ENCODE measurements at regions of chr3 and their contacts with region 1.

Region 1: GRCh38 chr3:18438586-18438985 is 13.4 kb upstream of the SATB1 start:
- DNase-seq: peak in 8 of 9 donors; percentile 64 to 91 (median 79)
- ATAC-seq: peak; percentile 95
- H3K4me3 ChIP-seq: peak overlapping the region; percentile 65
- H3K4me3 Mint-ChIP-seq: peak overlapping the region; percentile 80 to 100 (median 88)
- H3K27ac ChIP-seq: peak overlapping the region; percentile 97
- H3K27ac Mint-ChIP-seq: peak overlapping the region; percentile 87 to 95 (median 93)
- H3K4me1 ChIP-seq: peaks cover 11 to 19% of the 10 kb centered on the region in 2 donors
- H3K4me1 Mint-ChIP-seq: peaks cover 25 to 53% (median 43%) of the 10 kb centered on the region in 7 donors
- H3K27me3 ChIP-seq: no peaks in the 10 kb centered on the region
- H3K27me3 Mint-ChIP-seq: no peaks in the 10 kb centered on the region

Region 2: DNA sequence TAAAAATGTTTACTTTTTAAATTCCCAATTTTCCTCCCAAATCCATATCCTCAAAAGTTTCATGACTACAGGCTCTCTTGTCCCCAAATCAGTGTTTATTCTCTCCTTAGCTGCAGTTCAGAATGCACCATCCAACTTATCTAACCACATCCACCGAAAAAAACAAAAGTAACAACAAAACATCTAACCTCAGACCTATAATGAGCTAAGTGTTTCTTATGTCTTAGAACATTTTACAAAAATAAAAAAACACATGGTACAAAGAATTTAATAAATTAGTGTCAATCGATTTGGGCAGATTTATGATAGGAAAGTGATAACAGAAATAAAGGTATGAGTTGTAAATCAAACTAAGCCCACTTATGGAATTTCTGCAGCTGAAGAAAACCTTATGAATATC is 27.0 kb before region 1 on chr3:
- CTCF ChIA-PET with region 1: interaction called, 3 read pairs
- POLR2A ChIA-PET with region 1: interaction called, 206 read pairs
- intact Hi-C with region 1: loop called in 1 of 2 experiments (anchors 5 kb)
- DNase-seq: peak in 7 of 9 donors; percentile 46 to 80 (median 68)
- ATAC-seq: peak; percentile 83
- H3K4me3 ChIP-seq: peak overlapping the region; percentile 9
- H3K4me3 Mint-ChIP-seq: peak overlapping the region; percentile 46 to 88 (median 76)
- H3K27ac ChIP-seq: peak overlapping the region; percentile 55
- H3K27ac Mint-ChIP-seq: peak overlapping the region; percentile 75 to 97 (median 86)
- H3K4me1 ChIP-seq: peaks cover 13 to 87% of the 10 kb centered on the region in 2 donors
- H3K4me1 Mint-ChIP-seq: peaks cover 35 to 98% (median 89%) of the 10 kb centered on the region in 7 donors
- H3K27me3 ChIP-seq: no peaks in the 10 kb centered on the region
- H3K27me3 Mint-ChIP-seq: no peaks in the 10 kb centered on the region

Region 3: GRCh38 chr3:18424729-18425640 is 13.6 kb before region 1 on chr3 and contains the start of gene SATB1:
- CTCF ChIA-PET with region 1: interaction called, 7 read pairs
- POLR2A ChIA-PET with region 1: interaction called, 206 read pairs
- intact Hi-C with region 1: loop called (anchors 1 kb)
- DNase-seq: peak; percentile 55 to 72 (median 67)
- ATAC-seq: peak; percentile 62
- H3K4me3 ChIP-seq: peak within 1 kb of the TSS; percentile 72
- H3K4me3 Mint-ChIP-seq: peak within 1 kb of the TSS; percentile 91 to 100 (median 98)
- H3K27ac ChIP-seq: peak within 1 kb of the TSS; percentile 97
- H3K27ac Mint-ChIP-seq: peak within 1 kb of the TSS; percentile 87 to 99 (median 98)
- H3K4me1 ChIP-seq: peaks cover 8 to 21% of the 10 kb centered on the region in 2 donors
- H3K4me1 Mint-ChIP-seq: peaks cover 41 to 72% (median 62%) of the 10 kb centered on the region in 7 donors
- H3K27me3 ChIP-seq: no peaks in the 10 kb centered on the region
- H3K27me3 Mint-ChIP-seq: peaks cover 0 to 2% (median 0%) of the 10 kb centered on the region in 5 donors
- total RNA-seq, gene SATB1: 258 to 482 (median 451) TPM